Natural killer cell (primary cell): ENCODE measurements at regions of chr21 and their contacts with region 1.

Region 1: DNA sequence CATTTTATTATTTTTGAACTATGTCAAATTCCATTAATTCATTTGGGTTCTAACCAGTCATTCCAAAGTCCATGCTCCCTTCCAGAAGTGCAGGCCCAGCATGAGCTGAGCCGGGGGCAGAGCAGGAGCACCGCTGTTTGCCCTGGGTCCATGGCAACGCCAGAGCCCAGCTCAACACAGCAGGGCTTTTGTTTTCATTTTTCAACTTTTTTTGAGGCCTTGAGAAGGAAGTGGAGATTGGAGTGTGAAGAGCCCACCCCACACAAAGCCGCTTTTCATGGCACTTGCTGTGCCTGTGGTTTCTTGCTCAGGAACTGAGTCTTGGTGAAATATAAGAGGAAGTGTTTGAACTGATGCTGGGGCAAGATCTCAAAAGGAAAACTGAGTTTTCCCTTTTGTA is 13.2 kb upstream of the PRMT2 start:
- DNase-seq: peak; percentile 55 to 86
- ATAC-seq: peak; percentile 82 to 94 (median 92)
- H3K4me3 ChIP-seq: no peak overlapping the region
- H3K4me3 Mint-ChIP-seq: peak overlapping the region; percentile 70
- H3K27ac ChIP-seq: peak overlapping the region; percentile 94
- H3K27ac Mint-ChIP-seq: peak overlapping the region; percentile 89 to 91
- H3K4me1 ChIP-seq: peaks cover 46% of the 10 kb centered on the region
- H3K4me1 Mint-ChIP-seq: peaks cover 29 to 72% of the 10 kb centered on the region in 2 donors
- H3K27me3 ChIP-seq: no peaks in the 10 kb centered on the region
- H3K27me3 Mint-ChIP-seq: no peaks in the 10 kb centered on the region
- CTCF ChIP-seq: no peak

Region 2: GRCh38 chr21:45970674-45971615 is 651.3 kb before region 1 on chr21:
- intact Hi-C with region 1: no loop called
- DNase-seq: peak in 1 of 2 donors; percentile 64
- ATAC-seq: peak; percentile 36 to 52 (median 46)
- H3K4me3 ChIP-seq: no peak overlapping the region
- H3K4me3 Mint-ChIP-seq: no peak overlapping the region
- H3K27ac ChIP-seq: no peak overlapping the region
- H3K27ac Mint-ChIP-seq: no peak overlapping the region
- H3K4me1 ChIP-seq: peaks cover 44% of the 10 kb centered on the region
- H3K4me1 Mint-ChIP-seq: peaks cover 15 to 25% of the 10 kb centered on the region in 2 donors
- H3K27me3 ChIP-seq: peaks cover 36% of the 10 kb centered on the region
- H3K27me3 Mint-ChIP-seq: peaks cover 7 to 21% of the 10 kb centered on the region in 2 donors
- CTCF ChIP-seq: peak; percentile 75

Region 3: DNA sequence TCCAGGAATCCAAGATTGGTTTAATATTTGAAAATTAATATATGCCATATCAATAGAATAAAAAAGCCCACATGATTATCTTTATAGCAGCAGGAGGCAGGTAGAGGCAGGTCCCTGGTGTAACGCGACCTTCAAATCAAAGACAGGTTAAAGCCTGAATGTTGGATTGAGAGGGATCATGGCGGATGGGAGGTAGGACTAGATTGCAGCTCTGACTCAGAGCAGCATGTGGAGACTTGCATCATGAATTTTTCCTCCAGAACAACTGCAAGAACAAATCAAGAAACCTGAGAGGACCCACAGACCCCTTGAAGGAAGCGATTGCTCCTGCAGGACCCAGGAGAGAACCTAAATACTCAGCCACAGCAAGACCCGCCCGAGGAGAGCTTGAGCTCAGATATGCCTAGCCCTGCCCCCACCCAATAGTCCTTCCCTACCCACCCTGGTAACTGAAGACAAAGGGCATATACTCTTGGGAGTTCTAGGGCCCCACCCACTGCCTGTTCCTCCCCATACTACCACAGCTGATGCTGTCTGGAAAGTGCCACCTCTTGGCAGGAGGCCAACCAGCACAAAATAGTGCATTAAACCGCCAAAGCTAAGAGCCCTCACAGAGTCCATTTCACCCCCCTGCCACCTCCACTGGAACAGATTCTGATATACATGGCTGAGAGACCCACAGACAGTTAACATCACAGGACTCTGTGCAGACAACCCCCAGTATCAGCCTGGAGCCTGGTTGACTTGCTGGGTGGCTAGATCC is 36.9 kb before region 1 on chr21:
- intact Hi-C with region 1: no loop called
- DNase-seq: no peak
- ATAC-seq: no peak
- H3K4me3 ChIP-seq: no peak overlapping the region
- H3K4me3 Mint-ChIP-seq: no peak overlapping the region
- H3K27ac ChIP-seq: no peak overlapping the region
- H3K27ac Mint-ChIP-seq: no peak overlapping the region
- H3K4me1 ChIP-seq: peaks cover 9% of the 10 kb centered on the region
- H3K4me1 Mint-ChIP-seq: peaks cover 22 to 36% of the 10 kb centered on the region in 2 donors
- H3K27me3 ChIP-seq: no peaks in the 10 kb centered on the region
- H3K27me3 Mint-ChIP-seq: no peaks in the 10 kb centered on the region
- CTCF ChIP-seq: no peak

Region 4: DNA sequence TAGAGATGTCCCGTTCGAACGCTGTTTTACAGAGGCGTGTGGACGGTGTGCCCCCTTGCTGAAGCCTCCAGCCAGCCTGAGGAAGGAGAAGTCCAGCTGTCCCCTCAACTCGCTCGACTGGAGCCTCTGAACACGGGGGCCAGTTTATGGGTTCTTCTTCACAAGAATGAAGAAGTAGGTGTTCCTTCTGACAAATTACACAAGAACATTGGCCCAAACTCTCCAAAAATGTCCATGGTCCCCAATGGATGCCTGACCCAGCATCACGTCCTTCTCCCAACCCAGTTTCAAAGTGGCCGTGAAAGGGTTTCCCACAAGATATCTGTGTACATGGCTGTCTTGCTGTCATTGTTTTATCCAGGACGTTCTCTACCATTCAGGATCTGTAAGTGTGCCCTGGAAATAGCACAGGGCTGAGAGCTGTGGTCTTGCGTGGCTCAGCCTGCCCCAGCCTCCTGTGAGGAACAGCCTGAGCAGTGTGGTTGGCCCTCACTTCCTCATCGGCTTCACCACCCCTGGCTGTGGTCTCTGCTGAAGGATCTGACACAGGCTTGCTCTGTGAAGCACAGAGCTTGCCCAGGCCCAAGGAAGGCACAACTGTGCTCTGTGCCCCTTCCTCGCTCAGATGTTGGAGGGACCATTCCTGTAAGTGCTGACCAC is 16.3 kb before region 1 on chr21:
- intact Hi-C with region 1: loop called (anchors 2 kb)
- DNase-seq: peak; percentile 64 to 73
- ATAC-seq: peak; percentile 91 to 98 (median 91)
- H3K4me3 ChIP-seq: no peak overlapping the region
- H3K4me3 Mint-ChIP-seq: peak overlapping the region; percentile 78
- H3K27ac ChIP-seq: peak overlapping the region; percentile 58
- H3K27ac Mint-ChIP-seq: peak overlapping the region; percentile 84 to 86
- H3K4me1 ChIP-seq: peaks cover 40% of the 10 kb centered on the region
- H3K4me1 Mint-ChIP-seq: peaks cover 61 to 77% of the 10 kb centered on the region in 2 donors
- H3K27me3 ChIP-seq: no peaks in the 10 kb centered on the region
- H3K27me3 Mint-ChIP-seq: no peaks in the 10 kb centered on the region
- CTCF ChIP-seq: no peak

Region 5: DNA sequence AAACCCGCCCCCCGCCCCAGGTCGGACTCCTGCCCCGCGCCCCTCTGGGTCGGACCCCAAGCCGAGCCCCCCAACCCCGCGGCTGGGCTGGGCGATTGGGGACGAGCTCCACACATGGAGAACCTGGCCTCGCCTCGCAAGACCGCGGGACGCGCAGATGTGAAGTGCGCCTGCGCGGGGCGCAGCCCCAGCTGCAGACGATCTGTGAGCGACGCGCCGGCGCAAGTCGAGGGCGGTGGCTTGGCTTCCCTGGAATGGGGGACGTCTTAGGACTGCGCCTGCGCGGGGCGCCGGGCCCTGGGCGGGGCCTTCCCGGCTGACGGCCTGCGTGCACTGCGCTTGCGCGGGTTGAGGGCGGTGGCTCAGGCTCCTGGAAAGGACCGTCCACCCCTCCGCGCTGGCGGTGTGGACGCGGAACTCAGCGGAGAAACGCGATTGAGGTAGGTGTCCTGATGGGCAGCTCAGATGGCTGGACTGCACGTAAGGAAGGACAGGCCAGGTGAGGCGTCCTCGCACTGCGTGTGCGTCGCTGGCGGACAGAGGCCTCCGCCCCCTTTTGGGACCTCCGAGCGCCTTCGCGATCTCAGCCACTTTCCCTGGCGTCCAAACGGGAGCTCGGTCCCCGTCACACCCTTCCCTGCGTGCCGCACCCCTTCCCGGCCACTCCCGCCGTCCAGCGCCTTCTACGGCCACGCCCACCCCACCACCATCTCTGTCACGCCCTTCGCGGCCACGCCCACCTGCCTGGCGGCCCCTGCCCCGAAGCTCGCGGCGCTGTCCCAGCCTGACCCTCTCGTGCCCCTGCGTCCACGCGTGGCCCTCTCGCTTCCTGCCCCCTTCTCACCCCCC is 13.3 kb after region 1 on chr21 and contains the start of gene PRMT2:
- intact Hi-C with region 1: loop called (anchors 2 kb)
- DNase-seq: peak; percentile 97 to 99
- ATAC-seq: peak; percentile 81 to 95 (median 91)
- H3K4me3 ChIP-seq: peak within 1 kb of the TSS; percentile 86
- H3K4me3 Mint-ChIP-seq: peak within 1 kb of the TSS; percentile 98
- H3K27ac ChIP-seq: peak within 1 kb of the TSS; percentile 90
- H3K27ac Mint-ChIP-seq: peak within 1 kb of the TSS; percentile 93 to 99
- H3K4me1 ChIP-seq: peaks cover 31% of the 10 kb centered on the region
- H3K4me1 Mint-ChIP-seq: peaks cover 53 to 65% of the 10 kb centered on the region in 2 donors
- H3K27me3 ChIP-seq: no peaks in the 10 kb centered on the region
- H3K27me3 Mint-ChIP-seq: no peaks in the 10 kb centered on the region
- CTCF ChIP-seq: no peak
- total RNA-seq, gene PRMT2: 122 to 199 (median 170) TPM